ENCODE measurements at regions of chrX and their contacts with region 1.

Region 1: GRCh38 chrX:133670383-133670782 is 255.1 kb upstream of the GPC4 start:
- DNase-seq: peak; percentile 72
- ATAC-seq: peak; percentile 42
- H3K4me3 ChIP-seq: no peak overlapping the region
- H3K27ac ChIP-seq: no peak overlapping the region
- H3K4me1 ChIP-seq: peaks cover 25% of the 10 kb centered on the region
- H3K27me3 ChIP-seq: no peaks in the 10 kb centered on the region
- CTCF ChIP-seq: peak; percentile 82

Region 2: GRCh38 chrX:133053861-133054598 is 616.4 kb before region 1 on chrX:
- CTCF ChIA-PET with region 1: no interaction called
- POLR2A ChIA-PET with region 1: no interaction called
- intact Hi-C with region 1: loop called (anchors 10 kb)
- DNase-seq: peak; percentile 67
- ATAC-seq: peak; percentile 61
- H3K4me3 ChIP-seq: peak overlapping the region; percentile 39
- H3K27ac ChIP-seq: peak overlapping the region; percentile 54
- H3K4me1 ChIP-seq: peaks cover 48% of the 10 kb centered on the region
- H3K27me3 ChIP-seq: no peaks in the 10 kb centered on the region
- CTCF ChIP-seq: no peak

Region 3: GRCh38 chrX:133335027-133335426 is 335.4 kb before region 1 on chrX:
- CTCF ChIA-PET with region 1: no interaction called
- POLR2A ChIA-PET with region 1: no interaction called
- intact Hi-C with region 1: loop called (anchors 1 kb)
- DNase-seq: peak; percentile 50
- ATAC-seq: peak; percentile 51
- H3K4me3 ChIP-seq: no peak overlapping the region
- H3K27ac ChIP-seq: no peak overlapping the region
- H3K4me1 ChIP-seq: no peaks in the 10 kb centered on the region
- H3K27me3 ChIP-seq: no peaks in the 10 kb centered on the region
- CTCF ChIP-seq: peak; percentile 71

Region 4: DNA sequence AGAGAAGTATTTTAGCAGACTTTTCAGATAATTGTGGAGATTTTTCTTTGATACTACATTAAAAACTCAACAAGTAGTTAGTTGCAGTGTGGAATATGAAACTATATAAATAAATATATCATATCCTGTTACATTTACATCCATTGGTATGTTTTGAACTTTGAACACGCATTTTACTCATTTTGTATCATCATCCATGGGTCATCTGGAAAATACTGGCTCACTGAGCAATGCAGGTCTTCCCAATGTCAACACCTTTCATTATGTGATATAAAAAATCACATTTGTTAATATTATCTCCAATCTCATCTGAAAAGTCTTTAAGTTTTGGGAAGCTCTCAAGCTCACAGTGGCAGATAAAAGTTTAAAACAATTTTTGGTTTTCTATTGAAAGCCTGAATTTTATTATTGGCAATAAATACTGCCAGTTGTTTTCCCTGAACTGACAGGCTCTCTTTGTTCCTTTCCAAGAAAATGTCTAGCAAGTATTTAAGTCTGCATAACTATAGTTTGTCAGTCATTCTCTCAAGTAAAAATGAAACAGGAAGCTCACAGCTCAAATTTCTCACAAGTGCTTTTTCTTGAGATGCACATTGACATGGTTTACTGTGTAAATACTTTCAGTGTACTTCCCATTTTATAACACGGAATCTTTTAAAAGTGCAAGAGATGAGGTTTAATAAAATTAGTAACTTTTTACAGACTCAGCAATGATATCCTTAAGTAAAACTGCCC is 71.6 kb before region 1 on chrX:
- CTCF ChIA-PET with region 1: no interaction called
- POLR2A ChIA-PET with region 1: no interaction called
- intact Hi-C with region 1: no loop called
- DNase-seq: peak; percentile 69
- ATAC-seq: peak; percentile 78
- H3K4me3 ChIP-seq: peak overlapping the region; percentile 14
- H3K27ac ChIP-seq: peak overlapping the region; percentile 79
- H3K4me1 ChIP-seq: peaks cover 18% of the 10 kb centered on the region
- H3K27me3 ChIP-seq: no peaks in the 10 kb centered on the region
- CTCF ChIP-seq: no peak